ENCODE measurements at regions of chr11 and their contacts with region 1.

Region 1: GRCh38 chr11:66195867-66196266 is 72.6 kb upstream of the RAB1B start:
- DNase-seq: no peak
- ATAC-seq: no peak
- H3K4me3 ChIP-seq: no peak overlapping the region
- H3K27ac ChIP-seq: no peak overlapping the region
- H3K4me1 ChIP-seq: no peaks in the 10 kb centered on the region
- H3K27me3 ChIP-seq: no peaks in the 10 kb centered on the region
- CTCF ChIP-seq: no peak
- EP300 ChIP-seq: no peak
- POLR2A ChIP-seq: no peak
- RAD21 ChIP-seq: no peak

Region 2: GRCh38 chr11:65973439-65974110 is 222.3 kb before region 1 on chr11:
- CTCF ChIA-PET with region 1: no interaction called
- POLR2A ChIA-PET with region 1: no interaction called
- RAD21 ChIA-PET with region 1: no interaction called
- SMC1A ChIA-PET with region 1: no interaction called
- in situ Hi-C with region 1: no loop called
- intact Hi-C with region 1: no loop called
- DNase-seq: no peak
- ATAC-seq: no peak
- H3K4me3 ChIP-seq: no peak overlapping the region
- H3K27ac ChIP-seq: no peak overlapping the region
- H3K4me1 ChIP-seq: no peaks in the 10 kb centered on the region
- H3K27me3 ChIP-seq: no peaks in the 10 kb centered on the region
- CTCF ChIP-seq: no peak
- EP300 ChIP-seq: no peak
- POLR2A ChIP-seq: no peak
- RAD21 ChIP-seq: no peak

Region 3: DNA sequence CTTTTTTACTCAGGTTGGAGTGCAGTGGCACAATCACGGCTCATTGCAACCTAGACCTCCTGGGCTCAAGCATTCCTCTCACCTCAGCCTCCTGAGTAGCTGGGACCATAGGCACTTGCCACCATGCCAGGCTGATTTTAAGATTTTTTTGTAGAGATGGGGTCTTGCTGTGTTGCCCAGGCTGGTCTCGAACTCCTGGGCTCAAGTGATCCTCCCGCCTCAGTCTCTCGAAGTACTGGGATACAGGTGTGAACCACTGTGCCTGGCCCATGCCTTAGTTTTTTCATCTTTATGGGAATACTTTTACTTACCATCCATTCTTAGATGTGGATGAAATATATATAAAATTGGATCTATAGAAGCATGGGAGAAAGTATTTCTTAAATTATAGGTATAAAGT is 120.6 kb before region 1 on chr11:
- CTCF ChIA-PET with region 1: no interaction called
- POLR2A ChIA-PET with region 1: no interaction called
- RAD21 ChIA-PET with region 1: no interaction called
- SMC1A ChIA-PET with region 1: no interaction called
- in situ Hi-C with region 1: no loop called
- intact Hi-C with region 1: no loop called
- DNase-seq: no peak
- ATAC-seq: no peak
- H3K4me3 ChIP-seq: no peak overlapping the region
- H3K27ac ChIP-seq: no peak overlapping the region
- H3K4me1 ChIP-seq: peaks cover 17% of the 10 kb centered on the region
- H3K27me3 ChIP-seq: no peaks in the 10 kb centered on the region
- CTCF ChIP-seq: no peak
- EP300 ChIP-seq: no peak
- POLR2A ChIP-seq: no peak
- RAD21 ChIP-seq: no peak

Region 4: GRCh38 chr11:66143996-66144678 is 51.7 kb before region 1 on chr11:
- CTCF ChIA-PET with region 1: no interaction called
- POLR2A ChIA-PET with region 1: no interaction called
- RAD21 ChIA-PET with region 1: no interaction called
- SMC1A ChIA-PET with region 1: no interaction called
- in situ Hi-C with region 1: no loop called
- intact Hi-C with region 1: no loop called
- DNase-seq: no peak
- ATAC-seq: no peak
- H3K4me3 ChIP-seq: no peak overlapping the region
- H3K27ac ChIP-seq: no peak overlapping the region
- H3K4me1 ChIP-seq: peaks cover 38% of the 10 kb centered on the region
- H3K27me3 ChIP-seq: no peaks in the 10 kb centered on the region
- CTCF ChIP-seq: no peak
- EP300 ChIP-seq: no peak
- POLR2A ChIP-seq: no peak
- RAD21 ChIP-seq: no peak

Region 5: DNA sequence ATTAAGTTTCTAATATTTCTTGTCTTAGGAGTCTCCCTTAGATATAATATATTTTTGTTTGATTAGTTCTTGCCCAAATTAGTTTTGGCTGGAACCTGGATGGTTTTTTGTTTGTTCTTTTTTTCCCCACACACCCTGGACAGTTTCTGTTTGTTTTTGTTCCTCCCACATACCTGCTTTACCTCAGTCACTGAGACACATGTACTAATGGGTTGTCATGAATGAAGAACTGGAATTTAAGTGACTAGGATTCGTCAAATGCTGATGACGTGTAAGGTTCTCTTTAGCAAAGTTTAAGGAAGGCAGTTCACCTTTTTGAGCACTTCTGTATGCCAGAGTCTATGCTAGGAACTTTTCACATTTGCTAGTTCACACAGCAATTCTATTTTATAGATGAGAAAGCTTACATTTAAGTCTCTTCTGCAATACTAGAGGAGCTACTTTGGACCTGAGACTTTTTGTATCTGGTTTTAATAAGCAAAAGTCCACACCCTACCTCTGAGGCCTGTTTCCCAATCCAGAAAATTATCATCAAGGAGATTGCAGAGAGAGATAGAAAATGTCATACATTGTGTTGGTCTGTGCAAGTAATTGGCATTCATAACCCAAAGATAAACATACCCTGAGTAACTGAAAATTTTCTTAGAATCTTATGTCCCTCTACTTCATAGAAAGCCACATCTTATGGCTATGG is 14.1 kb before region 1 on chr11:
- CTCF ChIA-PET with region 1: interaction called, 5 read pairs
- POLR2A ChIA-PET with region 1: interaction called, 12 read pairs
- RAD21 ChIA-PET with region 1: no interaction called
- SMC1A ChIA-PET with region 1: interaction called, 3 read pairs
- in situ Hi-C with region 1: no loop called
- intact Hi-C with region 1: no loop called
- DNase-seq: no peak
- ATAC-seq: no peak
- H3K4me3 ChIP-seq: no peak overlapping the region
- H3K27ac ChIP-seq: no peak overlapping the region
- H3K4me1 ChIP-seq: peaks cover 7% of the 10 kb centered on the region
- H3K27me3 ChIP-seq: no peaks in the 10 kb centered on the region
- CTCF ChIP-seq: no peak
- EP300 ChIP-seq: no peak
- POLR2A ChIP-seq: no peak
- RAD21 ChIP-seq: no peak

Region 6: DNA sequence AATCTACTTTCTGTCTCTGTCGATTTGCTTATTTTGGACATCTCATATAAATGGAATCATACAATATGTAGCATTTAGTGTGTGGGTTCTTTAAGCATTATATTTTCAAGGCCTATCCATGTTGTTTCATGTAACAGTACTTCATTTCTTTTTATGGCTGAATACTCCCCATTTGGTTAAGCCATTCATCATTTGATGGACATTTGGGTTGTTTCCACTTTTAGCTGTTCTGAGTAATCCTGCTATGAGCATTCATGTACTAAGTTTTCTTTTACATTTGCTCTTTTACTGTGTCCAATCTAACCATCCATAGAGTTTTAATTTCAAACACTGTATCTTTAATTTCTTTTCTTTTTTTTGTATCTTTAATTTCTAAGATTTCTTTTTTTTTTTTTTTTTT is 588.7 kb after region 1 on chr11:
- CTCF ChIA-PET with region 1: no interaction called
- POLR2A ChIA-PET with region 1: no interaction called
- RAD21 ChIA-PET with region 1: no interaction called
- SMC1A ChIA-PET with region 1: no interaction called
- in situ Hi-C with region 1: no loop called
- intact Hi-C with region 1: no loop called
- DNase-seq: no peak
- ATAC-seq: no peak
- H3K4me3 ChIP-seq: no peak overlapping the region
- H3K27ac ChIP-seq: no peak overlapping the region
- H3K4me1 ChIP-seq: no peaks in the 10 kb centered on the region
- H3K27me3 ChIP-seq: no peaks in the 10 kb centered on the region
- CTCF ChIP-seq: no peak
- EP300 ChIP-seq: no peak
- POLR2A ChIP-seq: no peak
- RAD21 ChIP-seq: no peak